Mammary epithelial cell (primary cell): ENCODE measurements at regions of chr15 and their contacts with region 1.

Region 1: DNA sequence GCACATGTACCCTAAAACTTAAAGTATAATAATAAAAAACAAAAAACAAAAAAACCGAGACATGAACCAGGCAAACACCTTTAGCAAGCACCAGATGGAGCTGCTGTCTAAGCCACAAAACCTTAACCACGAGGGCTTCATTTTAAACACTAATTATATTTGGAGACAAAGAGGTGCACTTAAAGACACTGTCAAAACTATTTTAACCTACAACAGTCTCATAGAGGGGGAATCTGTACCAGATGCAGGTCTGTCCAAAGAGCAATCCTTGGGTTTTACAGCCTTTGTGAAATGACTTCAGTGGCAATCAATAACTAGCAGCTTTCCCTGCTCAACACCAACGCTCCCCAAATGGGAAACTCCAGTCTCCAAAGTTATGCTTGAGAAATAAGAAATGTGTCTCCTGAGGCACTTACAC is 115.7 kb upstream of the TSPAN3 start:
- DNase-seq: no peak
- H3K4me3 ChIP-seq: no peak overlapping the region
- H3K27ac ChIP-seq: no peak overlapping the region
- H3K4me1 ChIP-seq: peaks cover 8% of the 10 kb centered on the region
- H3K27me3 ChIP-seq: no peaks in the 10 kb centered on the region
- CTCF ChIP-seq: peak; percentile 19 to 53

Region 2: GRCh38 chr15:76501726-76502125 is 684.9 kb before region 1 on chr15:
- CTCF ChIA-PET with region 1: no interaction called
- dilution Hi-C with region 1: no loop called
- in situ Hi-C with region 1: no loop called
- intact Hi-C with region 1: no loop called
- DNase-seq: peak; percentile 1
- H3K4me3 ChIP-seq: no peak overlapping the region
- H3K27ac ChIP-seq: no peak overlapping the region
- H3K4me1 ChIP-seq: peaks cover 3% of the 10 kb centered on the region
- H3K27me3 ChIP-seq: no peaks in the 10 kb centered on the region
- CTCF ChIP-seq: no peak

Region 3: DNA sequence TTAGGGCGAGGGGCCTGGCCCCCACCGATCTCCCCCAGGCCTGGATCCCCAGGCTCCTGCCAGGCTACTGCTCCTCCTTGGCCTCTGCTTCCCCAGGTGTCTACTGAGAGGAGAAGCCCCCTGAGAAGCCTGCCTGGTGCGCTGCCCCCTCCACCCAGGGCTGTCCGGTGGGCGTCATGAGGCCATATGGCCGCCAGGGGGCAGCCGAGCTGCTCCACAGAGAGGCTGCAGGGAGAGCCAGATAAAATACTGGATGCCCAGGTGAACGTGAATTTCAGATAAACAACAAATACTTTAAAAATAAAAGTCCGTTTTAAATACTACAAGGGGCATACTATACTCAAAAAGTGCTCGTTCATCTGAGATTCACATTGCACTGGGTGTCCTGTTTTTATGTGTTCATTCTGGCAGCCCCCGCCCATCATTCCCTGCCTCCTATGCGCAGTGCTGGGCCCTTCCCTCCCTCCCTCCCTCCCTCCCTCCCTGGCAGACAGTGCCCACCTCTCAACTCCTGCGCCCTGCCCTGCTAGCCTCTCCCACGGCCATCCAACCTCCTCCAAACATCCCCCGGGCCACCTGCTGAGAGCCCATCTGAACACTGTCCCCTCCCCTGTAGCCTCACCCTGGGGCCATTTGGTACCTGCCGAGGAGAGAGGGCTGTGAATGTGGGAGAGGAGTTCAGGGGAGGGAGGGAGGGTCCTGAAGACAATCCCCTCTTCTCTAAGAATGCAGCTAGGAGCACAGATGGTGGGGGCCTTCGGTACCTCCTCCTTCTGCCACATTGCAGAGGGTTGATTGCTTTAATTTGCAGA is 162.1 kb before region 1 on chr15:
- CTCF ChIA-PET with region 1: no interaction called
- dilution Hi-C with region 1: no loop called
- in situ Hi-C with region 1: no loop called
- intact Hi-C with region 1: loop called (anchors 5 kb)
- DNase-seq: peak; percentile 21
- H3K4me3 ChIP-seq: no peak overlapping the region
- H3K27ac ChIP-seq: no peak overlapping the region
- H3K4me1 ChIP-seq: peaks cover 12% of the 10 kb centered on the region
- H3K27me3 ChIP-seq: no peaks in the 10 kb centered on the region
- CTCF ChIP-seq: peak; percentile 75 to 88

Region 4: GRCh38 chr15:77118882-77119321 is 67.7 kb before region 1 on chr15:
- CTCF ChIA-PET with region 1: no interaction called
- dilution Hi-C with region 1: no loop called
- in situ Hi-C with region 1: no loop called
- intact Hi-C with region 1: loop called (anchors 2 kb)
- DNase-seq: peak; percentile 40
- H3K4me3 ChIP-seq: no peak overlapping the region
- H3K27ac ChIP-seq: no peak overlapping the region
- H3K4me1 ChIP-seq: no peaks in the 10 kb centered on the region
- H3K27me3 ChIP-seq: no peaks in the 10 kb centered on the region
- CTCF ChIP-seq: peak; percentile 81 to 83

Region 5: GRCh38 chr15:77295446-77295845 is 108.8 kb after region 1 on chr15:
- CTCF ChIA-PET with region 1: no interaction called
- dilution Hi-C with region 1: loop called (anchors 10 kb)
- in situ Hi-C with region 1: no loop called
- intact Hi-C with region 1: no loop called
- DNase-seq: peak; percentile 55
- H3K4me3 ChIP-seq: no peak overlapping the region
- H3K27ac ChIP-seq: no peak overlapping the region
- H3K4me1 ChIP-seq: no peaks in the 10 kb centered on the region
- H3K27me3 ChIP-seq: no peaks in the 10 kb centered on the region
- CTCF ChIP-seq: no peak

Region 6: DNA sequence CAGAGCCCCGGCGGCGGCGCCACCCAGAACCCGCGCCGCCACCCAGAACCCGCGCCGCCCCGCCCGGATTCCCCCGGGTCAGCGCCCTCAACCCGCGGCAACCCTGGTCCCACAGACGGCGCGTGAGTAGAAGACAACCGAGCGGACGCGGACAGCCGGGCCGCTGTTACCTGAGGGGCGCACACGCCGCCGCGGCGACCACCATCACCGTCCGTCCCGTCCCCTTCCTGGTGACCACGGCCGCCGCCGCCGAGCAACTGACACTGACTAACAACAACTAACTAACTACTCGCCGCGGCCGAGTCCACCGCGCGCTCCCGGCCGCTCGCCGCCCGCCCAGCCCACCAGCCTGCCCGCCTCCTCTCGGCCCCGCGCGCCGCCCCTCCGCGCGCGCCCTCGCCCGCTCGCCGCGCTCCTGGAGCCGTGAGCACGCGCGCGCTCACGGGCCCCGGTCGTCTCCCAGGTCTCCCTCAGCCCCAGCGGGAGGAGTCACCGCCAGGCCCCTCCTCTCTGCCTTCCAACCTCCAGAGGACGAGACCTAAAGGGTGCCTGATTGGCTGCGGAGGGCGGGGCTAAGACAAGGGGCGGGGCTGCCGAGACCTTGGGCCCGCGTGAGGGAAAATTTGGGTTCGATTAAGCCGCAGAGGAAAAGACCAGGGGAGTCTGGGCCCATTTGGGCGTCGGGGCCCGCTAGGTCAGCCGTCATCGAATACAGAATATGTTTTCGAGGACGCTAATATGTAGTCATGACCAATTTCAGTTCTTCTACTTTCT is 233.4 kb after region 1 on chr15 and contains the start of gene PEAK1:
- CTCF ChIA-PET with region 1: no interaction called
- dilution Hi-C with region 1: no loop called
- in situ Hi-C with region 1: no loop called
- intact Hi-C with region 1: loop called (anchors 5 kb)
- DNase-seq: peak; percentile 98
- H3K4me3 ChIP-seq: peak within 1 kb of the TSS; percentile 93 to 99 (median 96)
- H3K27ac ChIP-seq: peak within 1 kb of the TSS; percentile 87
- H3K4me1 ChIP-seq: peaks cover 16% of the 10 kb centered on the region
- H3K27me3 ChIP-seq: no peaks in the 10 kb centered on the region
- CTCF ChIP-seq: no peak
- total RNA-seq, gene PEAK1: 25.5 to 27.6 TPM

Region 7: GRCh38 chr15:77543159-77543882 is 356.7 kb after region 1 on chr15:
- CTCF ChIA-PET with region 1: interaction called, 10 read pairs
- dilution Hi-C with region 1: no loop called
- in situ Hi-C with region 1: no loop called
- intact Hi-C with region 1: loop called (anchors 1 kb)
- DNase-seq: peak; percentile 77
- H3K4me3 ChIP-seq: peak overlapping the region in 2 of 3 experiments; percentile 40 to 43
- H3K27ac ChIP-seq: peak overlapping the region; percentile 9
- H3K4me1 ChIP-seq: peaks cover 27% of the 10 kb centered on the region
- H3K27me3 ChIP-seq: no peaks in the 10 kb centered on the region
- CTCF ChIP-seq: peak; percentile 82 to 97

Region 8: GRCh38 chr15:77633134-77633912 is 446.7 kb after region 1 on chr15:
- CTCF ChIA-PET with region 1: interaction called, 7 read pairs
- dilution Hi-C with region 1: no loop called
- in situ Hi-C with region 1: no loop called
- intact Hi-C with region 1: loop called (anchors 1 kb)
- DNase-seq: peak; percentile 70
- H3K4me3 ChIP-seq: peak overlapping the region; percentile 7 to 43 (median 38)
- H3K27ac ChIP-seq: no peak overlapping the region
- H3K4me1 ChIP-seq: peaks cover 5% of the 10 kb centered on the region
- H3K27me3 ChIP-seq: peaks cover 9% of the 10 kb centered on the region
- CTCF ChIP-seq: peak; percentile 99 to 100